ENCODE measurements at regions of chr17 and their contacts with region 1.

Region 1: DNA sequence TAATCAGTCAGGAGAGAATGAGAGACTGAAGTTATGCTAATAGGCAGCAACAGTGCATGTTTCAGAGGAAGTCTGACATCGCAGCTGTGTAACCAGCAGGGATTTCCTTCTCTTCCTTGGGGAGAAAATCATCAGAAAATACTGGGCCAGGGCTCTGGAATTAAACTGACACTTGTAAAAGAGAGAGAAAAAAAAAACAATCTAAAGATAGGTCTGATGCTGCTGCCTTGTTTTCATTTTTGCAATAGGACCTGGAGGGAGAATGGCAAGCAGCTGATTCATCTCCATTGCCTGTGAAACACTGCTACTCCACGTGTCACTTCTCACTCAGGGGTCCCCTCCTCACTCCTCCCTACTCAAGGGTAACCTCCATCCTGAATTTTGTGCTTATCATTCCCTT is 17.7 kb upstream of the CORO6 start:
- DNase-seq: no peak
- H3K4me3 ChIP-seq: no peak overlapping the region
- H3K27ac ChIP-seq: peak overlapping the region; percentile 75 to 80 (median 78)
- H3K4me1 ChIP-seq: peaks cover 67 to 70% (median 70%) of the 10 kb centered on the region in 4 donors
- H3K27me3 ChIP-seq: no peaks in the 10 kb centered on the region
- CTCF ChIP-seq: no peak
- EP300 ChIP-seq: no peak
- POLR2A ChIP-seq: no peak

Region 2: GRCh38 chr17:29760761-29761696 is 120.6 kb after region 1 on chr17:
- intact Hi-C with region 1: loop called (anchors 5 kb)
- DNase-seq: peak; percentile 93
- H3K4me3 ChIP-seq: peak overlapping the region; percentile 77 to 87 (median 79)
- H3K27ac ChIP-seq: peak overlapping the region; percentile 81 to 91 (median 88)
- H3K4me1 ChIP-seq: peaks cover 14 to 27% (median 23%) of the 10 kb centered on the region in 4 donors
- H3K27me3 ChIP-seq: no peaks in the 10 kb centered on the region
- CTCF ChIP-seq: peak in 1 of 3 experiments; percentile 5
- EP300 ChIP-seq: no peak
- POLR2A ChIP-seq: peak; percentile 21

Region 3: GRCh38 chr17:29777663-29778062 is 137.2 kb after region 1 on chr17:
- intact Hi-C with region 1: loop called (anchors 1 kb)
- DNase-seq: peak; percentile 42
- H3K4me3 ChIP-seq: no peak overlapping the region
- H3K27ac ChIP-seq: no peak overlapping the region
- H3K4me1 ChIP-seq: peaks cover 7 to 9% (median 8%) of the 10 kb centered on the region in 4 donors
- H3K27me3 ChIP-seq: no peaks in the 10 kb centered on the region
- CTCF ChIP-seq: no peak
- EP300 ChIP-seq: no peak
- POLR2A ChIP-seq: no peak

Measured in esophagus muscularis mucosa (tissue), 4 donors.